H1 (cell line): ENCODE measurements at regions of chr4 and their contacts with region 1.

Region 1: DNA sequence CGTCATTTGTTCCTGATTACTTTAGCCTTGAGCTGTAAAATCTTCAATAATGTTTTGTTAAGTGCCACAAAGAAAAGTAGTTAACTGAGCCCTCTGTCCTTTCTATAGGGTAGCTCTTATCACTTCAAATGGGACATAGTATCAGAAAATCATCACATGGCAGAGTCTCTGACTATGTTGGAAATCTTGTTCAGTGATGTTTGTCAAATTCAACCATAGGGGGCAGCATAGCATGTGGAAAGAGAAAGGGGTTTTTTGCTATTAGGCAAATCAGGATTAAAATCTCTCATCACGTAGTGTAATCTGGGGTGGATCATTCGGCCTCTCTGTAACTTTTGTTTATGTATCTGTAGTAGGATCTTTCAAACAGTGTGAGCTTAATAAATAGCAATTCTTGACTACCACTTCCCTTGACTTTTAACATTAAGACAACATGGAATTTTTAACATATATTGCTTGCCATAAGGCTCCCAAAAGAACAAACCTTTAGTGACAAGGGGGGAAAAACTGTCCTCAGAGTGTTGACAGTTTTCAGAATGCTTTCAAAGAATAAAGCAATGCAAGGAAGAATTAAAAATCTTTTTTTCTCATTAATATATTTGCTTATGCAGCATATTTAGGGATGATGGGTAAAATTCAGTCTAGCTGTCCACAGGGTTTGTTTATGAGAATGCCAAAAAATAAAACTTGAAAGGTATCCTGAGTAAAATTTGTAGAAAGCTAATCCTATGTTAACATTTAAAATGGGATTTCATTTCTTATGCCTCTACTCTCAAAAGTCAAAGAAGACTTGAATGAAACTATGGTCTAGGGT is 127.2 kb downstream of the FBXW7 start:
- DNase-seq: no peak
- H3K4me3 ChIP-seq: no peak overlapping the region
- H3K27ac ChIP-seq: no peak overlapping the region
- H3K4me1 ChIP-seq: no peaks in the 10 kb centered on the region
- H3K27me3 ChIP-seq: no peaks in the 10 kb centered on the region
- CTCF ChIP-seq: peak in 2 of 3 experiments; percentile 54 to 67; a peak in 2 of 4 replicates
- EP300 ChIP-seq: no peak
- POLR2A ChIP-seq: no peak
- RAD21 ChIP-seq: peak; percentile 78 to 83

Region 2: GRCh38 chr4:152422817-152423320 is 14.1 kb after region 1 on chr4:
- CTCF ChIA-PET with region 1: interaction called, 23 read pairs
- POLR2A ChIA-PET with region 1: interaction called, 3 read pairs
- DNase-seq: no peak
- H3K4me3 ChIP-seq: no peak overlapping the region
- H3K27ac ChIP-seq: no peak overlapping the region
- H3K4me1 ChIP-seq: peaks cover 0 to 9% (median 9%) of the 10 kb centered on the region in 4 experiments; a peak in 3 of 7 replicates
- H3K27me3 ChIP-seq: no peaks in the 10 kb centered on the region
- CTCF ChIP-seq: no peak
- EP300 ChIP-seq: no peak
- POLR2A ChIP-seq: no peak
- RAD21 ChIP-seq: no peak

Region 3: GRCh38 chr4:152427981-152428380 is 19.3 kb after region 1 on chr4:
- CTCF ChIA-PET with region 1: interaction called, 20 read pairs
- POLR2A ChIA-PET with region 1: no interaction called
- DNase-seq: no peak
- H3K4me3 ChIP-seq: no peak overlapping the region
- H3K27ac ChIP-seq: no peak overlapping the region
- H3K4me1 ChIP-seq: peaks cover 0 to 13% (median 11%) of the 10 kb centered on the region in 4 experiments; a peak in 3 of 7 replicates
- H3K27me3 ChIP-seq: no peaks in the 10 kb centered on the region
- CTCF ChIP-seq: no peak
- EP300 ChIP-seq: no peak
- POLR2A ChIP-seq: no peak
- RAD21 ChIP-seq: no peak

Region 4: DNA sequence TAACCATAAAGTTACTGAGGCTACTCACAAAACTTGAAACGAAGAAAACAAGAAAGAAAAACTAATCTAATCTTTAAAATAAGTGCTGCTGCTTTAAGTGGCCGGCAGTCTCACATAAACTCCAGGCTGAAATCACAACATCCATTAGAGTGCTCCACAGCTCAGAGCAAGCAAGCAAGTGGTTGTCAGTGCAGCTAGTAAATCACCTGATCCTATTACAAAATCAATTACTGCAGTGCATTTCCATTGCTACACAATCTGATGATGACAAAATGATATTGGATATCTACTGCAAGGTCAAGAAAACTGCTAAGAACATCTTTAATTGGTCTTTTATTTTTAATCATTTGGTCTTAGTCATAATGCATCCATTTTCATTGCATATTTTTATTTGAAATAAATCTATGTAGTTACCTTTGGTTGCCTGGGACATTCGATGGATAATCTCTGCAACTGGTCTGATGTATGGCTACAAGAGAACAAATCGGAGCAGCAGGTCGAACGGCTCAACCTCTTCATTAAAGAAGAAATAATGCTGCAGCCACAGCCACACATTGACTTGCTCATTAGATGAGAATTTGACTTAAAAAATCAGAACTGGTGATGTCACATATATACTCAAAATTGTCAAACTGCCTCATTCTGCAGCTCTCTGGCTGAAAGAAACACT is 39.5 kb after region 1 on chr4:
- CTCF ChIA-PET with region 1: interaction called, 16 read pairs
- POLR2A ChIA-PET with region 1: no interaction called
- DNase-seq: no peak
- H3K4me3 ChIP-seq: no peak overlapping the region
- H3K27ac ChIP-seq: no peak overlapping the region
- H3K4me1 ChIP-seq: no peaks in the 10 kb centered on the region
- H3K27me3 ChIP-seq: no peaks in the 10 kb centered on the region
- CTCF ChIP-seq: no peak
- EP300 ChIP-seq: no peak
- POLR2A ChIP-seq: no peak
- RAD21 ChIP-seq: no peak